A673 (cell line): ENCODE measurements at regions of chr2 and their contacts with region 1.

Region 1: GRCh38 chr2:38581193-38582147 is 21.3 kb downstream of the HNRNPLL start:
- DNase-seq: peak; percentile 87
- H3K4me3 ChIP-seq: no peak overlapping the region
- H3K27ac ChIP-seq: no peak overlapping the region
- H3K4me1 ChIP-seq: peaks cover 51% of the 10 kb centered on the region
- H3K27me3 ChIP-seq: no peaks in the 10 kb centered on the region
- CTCF ChIP-seq: peak; percentile 76

Region 2: DNA sequence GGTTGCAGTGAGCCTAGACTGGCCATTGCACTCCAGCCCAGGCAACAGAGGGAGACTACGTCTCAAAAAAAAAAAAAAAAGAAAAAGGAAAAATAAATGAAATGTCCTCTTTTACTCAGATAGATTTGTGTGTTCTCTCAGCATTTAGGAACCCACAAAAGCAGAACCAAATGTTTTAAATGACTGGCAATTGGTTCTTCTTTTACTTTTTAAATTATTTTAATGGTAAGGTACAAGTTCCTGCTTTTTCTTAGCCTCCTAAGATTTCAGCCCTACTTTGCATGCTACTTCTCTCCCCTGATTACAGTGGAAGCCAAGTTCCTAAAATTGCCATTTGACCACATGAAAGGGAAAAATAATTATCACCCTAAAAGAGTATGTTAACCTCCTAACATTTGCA is 146.2 kb after region 1 on chr2:
- CTCF ChIA-PET with region 1: interaction called, 3 read pairs
- POLR2A ChIA-PET with region 1: no interaction called
- intact Hi-C with region 1: loop called (anchors 2 kb)
- DNase-seq: no peak
- H3K4me3 ChIP-seq: no peak overlapping the region
- H3K27ac ChIP-seq: no peak overlapping the region
- H3K4me1 ChIP-seq: no peaks in the 10 kb centered on the region
- H3K27me3 ChIP-seq: no peaks in the 10 kb centered on the region
- CTCF ChIP-seq: no peak

Region 3: GRCh38 chr2:38771632-38772031 is 190.2 kb after region 1 on chr2:
- CTCF ChIA-PET with region 1: no interaction called
- POLR2A ChIA-PET with region 1: interaction called, 11 read pairs
- intact Hi-C with region 1: no loop called
- DNase-seq: peak; percentile 10
- H3K4me3 ChIP-seq: no peak overlapping the region
- H3K27ac ChIP-seq: no peak overlapping the region
- H3K4me1 ChIP-seq: peaks cover 18% of the 10 kb centered on the region
- H3K27me3 ChIP-seq: no peaks in the 10 kb centered on the region
- CTCF ChIP-seq: no peak

Region 4: DNA sequence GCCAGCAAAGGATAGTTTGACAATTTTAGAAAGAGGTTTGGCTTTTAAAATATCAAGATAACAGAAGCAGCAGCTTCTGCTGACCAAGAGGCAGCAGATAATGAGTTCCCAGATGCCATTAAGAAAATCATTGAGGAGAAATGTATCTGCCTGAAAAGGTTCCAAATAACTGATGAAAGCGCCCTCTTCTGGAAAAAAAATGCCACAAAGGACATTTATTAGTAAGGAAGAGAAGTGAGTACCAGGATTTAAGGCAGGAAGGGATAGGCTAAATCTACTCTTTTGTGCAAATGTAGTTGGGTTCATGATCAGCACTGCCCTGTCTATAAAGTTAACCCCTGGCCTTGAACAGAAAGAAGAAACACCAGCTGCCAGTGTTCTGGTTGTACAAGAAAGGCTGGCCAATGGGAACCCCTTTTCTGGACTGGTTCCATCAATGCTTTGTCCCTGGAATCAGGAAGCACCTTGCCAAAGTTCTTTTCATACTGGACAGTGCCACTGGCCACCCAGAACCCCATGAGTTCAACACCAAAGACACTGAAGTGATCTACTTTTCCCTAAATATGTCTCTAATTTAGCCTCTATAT is 253.6 kb after region 1 on chr2:
- CTCF ChIA-PET with region 1: no interaction called
- POLR2A ChIA-PET with region 1: no interaction called
- intact Hi-C with region 1: loop called (anchors 5 kb)
- DNase-seq: peak; percentile 70
- H3K4me3 ChIP-seq: no peak overlapping the region
- H3K27ac ChIP-seq: no peak overlapping the region
- H3K4me1 ChIP-seq: no peaks in the 10 kb centered on the region
- H3K27me3 ChIP-seq: no peaks in the 10 kb centered on the region
- CTCF ChIP-seq: peak; percentile 71

Region 5: DNA sequence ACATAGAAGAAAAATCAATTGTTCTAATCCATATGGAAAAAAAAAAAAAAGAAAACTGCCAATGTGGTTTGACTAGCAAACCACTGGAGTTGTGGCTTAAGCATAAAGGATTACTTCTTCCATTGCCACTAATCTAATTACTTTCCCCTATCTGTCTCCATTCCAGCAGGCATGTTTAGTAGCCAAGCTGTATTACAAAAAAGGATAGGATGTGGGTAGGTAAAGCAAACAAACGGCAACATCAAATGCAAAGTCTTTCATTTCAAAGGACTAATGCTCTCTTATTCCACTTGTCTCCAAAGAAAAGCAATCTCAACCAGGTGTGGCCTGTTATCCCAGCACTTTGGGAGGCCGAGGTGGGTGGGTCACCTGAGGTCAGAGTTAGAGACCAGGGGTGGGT is 1833.9 kb after region 1 on chr2:
- CTCF ChIA-PET with region 1: no interaction called
- POLR2A ChIA-PET with region 1: interaction called, 23 read pairs
- intact Hi-C with region 1: no loop called
- DNase-seq: no peak
- H3K4me3 ChIP-seq: no peak overlapping the region
- H3K27ac ChIP-seq: no peak overlapping the region
- H3K4me1 ChIP-seq: no peaks in the 10 kb centered on the region
- H3K27me3 ChIP-seq: peaks cover 29% of the 10 kb centered on the region
- CTCF ChIP-seq: no peak